AG04450 (cell line): ENCODE measurements at regions of chr1 and their contacts with region 1.

Region 1: GRCh38 chr1:178031856-178032320 is 62.0 kb upstream of the RASAL2 start:
- DNase-seq: peak; percentile 87
- H3K4me3 ChIP-seq: no peak overlapping the region
- H3K27ac ChIP-seq: no peak overlapping the region
- H3K27me3 ChIP-seq: no peaks in the 10 kb centered on the region
- CTCF ChIP-seq: peak; percentile 88

Region 2: GRCh38 chr1:177996957-177997356 is 34.9 kb before region 1 on chr1:
- CTCF ChIA-PET with region 1: interaction called, 14 read pairs
- POLR2A ChIA-PET with region 1: no interaction called
- DNase-seq: no peak
- H3K4me3 ChIP-seq: no peak overlapping the region
- H3K27ac ChIP-seq: no peak overlapping the region
- H3K27me3 ChIP-seq: peaks cover 2% of the 10 kb centered on the region
- CTCF ChIP-seq: no peak

Region 3: GRCh38 chr1:178046591-178047270 is 14.8 kb after region 1 on chr1:
- CTCF ChIA-PET with region 1: interaction called, 13 read pairs
- POLR2A ChIA-PET with region 1: no interaction called
- DNase-seq: no peak
- H3K4me3 ChIP-seq: no peak overlapping the region
- H3K27ac ChIP-seq: no peak overlapping the region
- H3K27me3 ChIP-seq: no peaks in the 10 kb centered on the region
- CTCF ChIP-seq: no peak

Region 4: DNA sequence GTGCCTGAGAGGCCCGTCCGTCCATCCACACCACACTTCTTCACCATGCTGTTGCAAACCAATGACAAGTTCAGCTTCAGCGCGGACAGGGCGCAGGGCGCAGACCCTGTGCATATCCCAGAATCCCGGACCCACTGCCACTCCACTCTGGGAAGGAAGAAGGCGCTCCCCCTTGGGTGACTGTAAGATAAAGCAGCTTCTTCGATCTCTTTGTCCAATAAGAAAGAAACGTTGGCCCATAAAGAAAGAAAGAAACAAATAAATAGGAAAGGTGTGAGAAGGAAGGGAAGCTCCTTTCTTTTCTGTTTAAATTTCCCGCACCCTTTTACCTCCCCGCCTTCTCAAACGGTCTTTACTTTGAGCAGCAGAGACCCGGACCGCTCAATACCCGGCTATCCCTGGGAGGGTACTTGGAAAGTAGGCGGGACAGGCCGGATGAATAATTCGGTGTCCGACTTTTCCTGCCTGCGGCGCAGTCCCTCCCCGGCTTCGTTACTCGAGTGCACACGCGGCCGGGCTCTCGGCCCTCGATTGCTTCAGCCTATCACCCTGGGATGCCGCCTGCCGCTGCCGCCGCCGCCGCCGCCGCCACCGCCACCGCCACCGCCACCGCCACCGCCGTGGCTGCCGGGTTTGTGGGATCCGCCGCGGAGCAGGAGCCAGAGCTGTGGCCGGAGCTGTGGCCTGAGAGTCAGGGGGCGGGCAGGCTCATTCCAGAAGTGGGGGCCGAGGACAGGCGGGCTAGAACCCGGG is 61.5 kb after region 1 on chr1:
- CTCF ChIA-PET with region 1: interaction called, 26 read pairs
- POLR2A ChIA-PET with region 1: interaction called, 6 read pairs
- DNase-seq: peak; percentile 91
- H3K4me3 ChIP-seq: peak overlapping the region; percentile 88
- H3K27ac ChIP-seq: peak overlapping the region; percentile 68
- H3K27me3 ChIP-seq: no peaks in the 10 kb centered on the region
- CTCF ChIP-seq: no peak

Region 5: DNA sequence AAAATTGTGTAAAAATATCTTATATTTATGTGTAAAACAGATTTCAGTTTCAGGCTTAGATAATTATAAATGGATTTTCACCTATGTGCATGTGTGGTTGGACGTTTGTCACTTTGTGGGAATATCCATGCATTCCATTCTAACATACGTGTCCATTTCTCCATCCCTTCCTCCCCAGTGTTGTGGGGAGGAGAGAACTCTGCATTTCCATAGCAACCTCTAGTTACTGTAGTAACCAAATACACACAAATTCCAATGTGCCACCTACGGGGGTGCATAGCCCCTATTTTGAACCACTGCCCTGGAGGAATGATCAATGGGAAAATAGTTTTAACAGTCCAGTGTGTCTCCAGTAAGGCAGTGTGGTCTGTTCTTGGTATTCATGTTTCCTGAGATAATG is 141.1 kb after region 1 on chr1:
- CTCF ChIA-PET with region 1: interaction called, 10 read pairs
- POLR2A ChIA-PET with region 1: no interaction called
- DNase-seq: no peak
- H3K4me3 ChIP-seq: no peak overlapping the region
- H3K27ac ChIP-seq: no peak overlapping the region
- H3K27me3 ChIP-seq: no peaks in the 10 kb centered on the region
- CTCF ChIP-seq: no peak

Region 6: DNA sequence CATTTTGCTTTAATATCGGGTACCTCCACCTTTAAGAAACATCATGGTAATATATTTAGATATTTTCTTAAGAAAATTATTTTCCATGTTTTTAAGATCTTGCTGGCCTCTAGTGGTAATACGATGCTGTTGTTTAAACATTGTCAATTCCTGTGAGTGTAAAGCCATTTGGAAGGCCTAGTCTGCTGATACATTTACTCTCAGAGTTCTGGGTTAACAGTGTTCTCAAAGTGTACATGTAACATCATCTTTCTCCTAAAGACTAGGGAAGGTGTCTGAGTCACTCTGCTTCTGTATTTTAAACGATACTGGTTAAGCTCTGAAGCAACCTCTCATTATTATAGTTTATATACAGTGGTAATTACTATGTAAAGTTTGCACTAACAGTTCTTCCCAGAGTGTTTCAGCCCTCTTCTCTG is 251.1 kb after region 1 on chr1:
- CTCF ChIA-PET with region 1: interaction called, 138 read pairs
- POLR2A ChIA-PET with region 1: no interaction called
- DNase-seq: peak; percentile 38
- H3K4me3 ChIP-seq: no peak overlapping the region
- H3K27ac ChIP-seq: no peak overlapping the region
- H3K27me3 ChIP-seq: no peaks in the 10 kb centered on the region
- CTCF ChIP-seq: peak; percentile 73

Region 7: GRCh38 chr1:178310685-178311105 is 278.8 kb after region 1 on chr1:
- CTCF ChIA-PET with region 1: interaction called, 10 read pairs
- POLR2A ChIA-PET with region 1: no interaction called
- DNase-seq: peak; percentile 21
- H3K4me3 ChIP-seq: no peak overlapping the region
- H3K27ac ChIP-seq: no peak overlapping the region
- H3K27me3 ChIP-seq: no peaks in the 10 kb centered on the region
- CTCF ChIP-seq: peak; percentile 75